H1 (cell line): ENCODE measurements at regions of chr7 and their contacts with region 1.

Region 1: GRCh38 chr7:112226701-112227276 is 20.3 kb downstream of the ZNF277 start:
- DNase-seq: no peak
- H3K4me3 ChIP-seq: no peak overlapping the region
- H3K27ac ChIP-seq: no peak overlapping the region
- H3K4me1 ChIP-seq: no peaks in the 10 kb centered on the region; a peak in 2 of 7 replicates
- H3K27me3 ChIP-seq: no peaks in the 10 kb centered on the region
- CTCF ChIP-seq: no peak
- EP300 ChIP-seq: no peak
- POLR2A ChIP-seq: no peak
- RAD21 ChIP-seq: no peak

Region 2: GRCh38 chr7:112212571-112213213 is 14.1 kb before region 1 on chr7:
- CTCF ChIA-PET with region 1: interaction called, 18 read pairs
- POLR2A ChIA-PET with region 1: no interaction called
- DNase-seq: no peak
- H3K4me3 ChIP-seq: no peak overlapping the region
- H3K27ac ChIP-seq: no peak overlapping the region
- H3K4me1 ChIP-seq: peaks cover 0 to 9% (median 4%) of the 10 kb centered on the region in 4 experiments; a peak in 4 of 7 replicates
- H3K27me3 ChIP-seq: peaks cover 0 to 2% (median 0%) of the 10 kb centered on the region in 4 experiments; a peak in 1 of 7 replicates
- CTCF ChIP-seq: no peak
- EP300 ChIP-seq: no peak
- POLR2A ChIP-seq: no peak
- RAD21 ChIP-seq: no peak